Stomach (tissue), 19 donors: ENCODE measurements at regions of chr17 and their contacts with region 1.

Region 1: DNA sequence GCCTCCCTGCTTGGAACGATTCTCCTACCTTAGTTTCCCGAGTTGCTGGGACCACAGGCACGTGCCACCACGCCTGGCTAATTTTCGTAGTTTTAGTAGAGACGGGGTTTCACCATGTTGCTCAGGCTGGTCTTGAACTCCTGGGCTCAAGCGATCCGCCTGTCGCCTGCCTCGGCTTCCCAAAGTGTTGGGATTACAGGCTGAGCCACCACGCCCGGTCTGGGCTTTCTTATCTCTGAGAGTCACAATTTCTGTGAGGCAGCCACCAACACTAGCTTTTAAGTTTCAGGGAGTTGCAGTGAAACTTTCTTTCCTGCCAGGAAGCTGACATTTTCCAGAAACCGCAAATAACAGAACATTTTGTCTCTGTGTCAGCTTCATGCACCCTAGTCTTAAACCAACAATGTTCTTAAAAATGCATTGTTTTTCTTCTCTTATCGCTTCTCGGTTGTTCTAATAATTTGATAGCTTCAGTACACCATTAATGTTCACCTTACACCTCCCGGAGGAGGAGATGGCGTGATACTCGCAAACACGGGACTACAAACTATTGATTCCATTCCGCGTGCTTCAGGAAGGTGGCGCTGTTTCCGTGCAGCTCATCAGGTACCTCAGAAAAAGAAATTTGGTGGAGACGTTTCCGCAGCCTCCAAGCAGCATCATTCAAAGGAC is 7.4 kb upstream of the DHRS7B start:
- DNase-seq: peak; percentile 80 to 90
- H3K4me3 ChIP-seq: peak overlapping the region in 2 of 4 donors; percentile 4 to 10
- H3K27ac ChIP-seq: peak overlapping the region; percentile 69 to 84 (median 76)
- H3K4me1 ChIP-seq: peaks cover 0 to 18% (median 8%) of the 10 kb centered on the region in 4 donors
- H3K27me3 ChIP-seq: no peaks in the 10 kb centered on the region
- CTCF ChIP-seq: peak in 5 of 7 experiments; percentile 77 to 88 (median 79)
- EP300 ChIP-seq: no peak
- POLR2A ChIP-seq: no peak

Region 2: GRCh38 chr17:21194703-21195102 is 75.3 kb after region 1 on chr17:
- intact Hi-C with region 1: no loop called
- DNase-seq: peak in 1 of 2 donors; percentile 76
- H3K4me3 ChIP-seq: no peak overlapping the region
- H3K27ac ChIP-seq: peak overlapping the region in 3 of 5 donors; percentile 7 to 40 (median 37)
- H3K4me1 ChIP-seq: peaks cover 0 to 53% (median 24%) of the 10 kb centered on the region in 4 donors
- H3K27me3 ChIP-seq: no peaks in the 10 kb centered on the region
- CTCF ChIP-seq: no peak
- EP300 ChIP-seq: no peak
- POLR2A ChIP-seq: no peak

Region 3: DNA sequence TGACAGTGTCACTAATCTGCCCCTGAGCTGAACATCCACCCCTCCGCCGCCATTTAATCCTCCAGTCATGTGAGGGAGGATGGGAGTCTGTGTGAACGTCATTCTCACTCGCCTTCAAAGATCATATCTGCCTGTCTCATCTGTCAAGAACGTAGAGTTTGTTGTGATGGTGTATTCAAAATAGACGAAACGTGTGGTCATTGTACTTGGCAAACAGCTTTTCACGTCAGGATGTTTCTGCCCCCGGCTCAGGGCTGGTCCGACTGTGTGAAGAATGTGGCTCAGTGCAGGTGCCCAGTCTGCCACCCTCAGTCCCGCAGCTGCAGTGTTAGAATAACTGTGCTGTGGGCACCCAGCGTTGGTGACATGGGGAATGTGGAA is 404.8 kb after region 1 on chr17:
- intact Hi-C with region 1: loop called (anchors 10 kb)
- DNase-seq: no peak
- H3K4me3 ChIP-seq: no peak overlapping the region
- H3K27ac ChIP-seq: peak overlapping the region in 1 of 5 donors; percentile 60
- H3K4me1 ChIP-seq: peaks cover 0 to 15% (median 0%) of the 10 kb centered on the region in 4 donors
- H3K27me3 ChIP-seq: no peaks in the 10 kb centered on the region
- CTCF ChIP-seq: no peak
- EP300 ChIP-seq: no peak
- POLR2A ChIP-seq: no peak